AG04450 (cell line): ENCODE measurements at regions of chr4 and their contacts with region 1.

Region 1: GRCh38 chr4:44760142-44760898 is 34.0 kb upstream of the GNPDA2 start:
- DNase-seq: no peak
- H3K4me3 ChIP-seq: no peak overlapping the region
- H3K27ac ChIP-seq: no peak overlapping the region
- H3K27me3 ChIP-seq: no peaks in the 10 kb centered on the region
- CTCF ChIP-seq: peak; percentile 60

Region 2: DNA sequence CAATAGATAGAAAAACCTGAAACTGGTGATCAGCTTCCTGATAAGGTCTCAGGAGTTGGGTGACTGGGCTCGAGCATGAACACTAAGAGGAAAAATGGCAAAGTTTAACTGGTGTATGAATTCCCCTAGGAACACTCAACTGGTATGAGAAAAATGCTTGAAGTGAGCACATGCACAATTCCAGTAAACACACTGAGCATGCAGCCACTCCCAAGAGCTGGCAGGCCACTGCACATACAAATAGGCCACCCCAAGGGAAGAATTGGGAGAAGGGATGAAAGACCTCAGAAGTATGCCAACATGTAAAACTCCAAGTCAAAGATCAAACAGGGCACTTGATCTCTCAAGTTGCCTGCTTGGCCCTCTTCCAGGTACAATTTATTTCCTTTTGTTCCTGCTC is 11.5 kb after region 1 on chr4:
- CTCF ChIA-PET with region 1: interaction called, 12 read pairs
- POLR2A ChIA-PET with region 1: no interaction called
- DNase-seq: no peak
- H3K4me3 ChIP-seq: no peak overlapping the region
- H3K27ac ChIP-seq: no peak overlapping the region
- H3K27me3 ChIP-seq: no peaks in the 10 kb centered on the region
- CTCF ChIP-seq: no peak